ENCODE measurements at regions of chr1 and their contacts with region 1.

Region 1: DNA sequence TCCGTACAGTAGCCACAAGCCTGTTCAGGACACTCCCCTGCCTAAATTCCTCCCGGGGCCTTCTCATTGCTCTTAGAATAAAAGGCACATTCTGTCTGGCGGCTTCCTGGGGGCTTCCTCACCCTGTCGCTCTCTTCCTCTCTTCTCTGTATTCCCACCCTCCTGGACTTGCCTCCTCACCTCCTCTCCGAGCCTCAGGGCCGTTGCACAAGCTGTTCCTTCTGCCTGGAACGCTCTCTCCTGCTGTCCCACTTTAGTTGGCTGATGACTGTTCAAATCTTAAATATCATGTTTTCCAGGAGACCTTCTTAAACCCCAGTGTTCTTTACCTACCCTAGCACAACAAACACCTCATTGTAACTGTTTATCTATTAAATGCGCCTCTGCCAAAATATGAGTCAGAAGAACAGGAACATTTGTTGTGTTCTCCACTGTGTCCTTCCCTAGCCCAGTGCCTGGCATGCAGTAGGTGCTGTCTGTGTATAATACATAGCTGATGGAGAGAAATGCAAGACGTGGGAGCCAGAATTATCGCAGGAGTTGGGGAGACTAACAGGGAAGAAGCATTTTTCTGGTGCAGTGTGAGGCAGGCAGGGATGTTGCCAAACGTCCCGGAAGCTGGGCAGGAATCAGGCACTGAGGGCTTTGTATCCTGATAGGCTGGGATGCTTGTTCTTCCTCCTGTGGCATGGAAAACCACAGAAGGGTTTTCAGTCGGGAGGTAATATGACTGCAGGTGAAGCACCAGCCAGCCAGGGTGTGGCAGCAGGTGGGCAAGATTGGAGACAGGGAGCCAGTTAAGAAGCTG is 24.1 kb upstream of the THRAP3 start:
- DNase-seq: peak; percentile 55
- H3K4me3 Mint-ChIP-seq: peak overlapping the region; percentile 4
- H3K27ac Mint-ChIP-seq: peak overlapping the region; percentile 53
- H3K4me1 Mint-ChIP-seq: peaks cover 27% of the 10 kb centered on the region
- H3K27me3 Mint-ChIP-seq: no peaks in the 10 kb centered on the region
- CTCF ChIP-seq: no peak

Region 2: GRCh38 chr1:36062321-36062720 is 137.8 kb before region 1 on chr1:
- CTCF ChIA-PET with region 1: no interaction called
- intact Hi-C with region 1: no loop called
- DNase-seq: no peak
- H3K4me3 Mint-ChIP-seq: no peak overlapping the region
- H3K27ac Mint-ChIP-seq: no peak overlapping the region
- H3K4me1 Mint-ChIP-seq: no peaks in the 10 kb centered on the region
- H3K27me3 Mint-ChIP-seq: no peaks in the 10 kb centered on the region
- CTCF ChIP-seq: no peak

Region 3: GRCh38 chr1:36223993-36224536 is 23.9 kb after region 1 on chr1 and contains the start of gene THRAP3:
- CTCF ChIA-PET with region 1: interaction called, 4 read pairs
- intact Hi-C with region 1: loop called (anchors 2 kb)
- DNase-seq: peak; percentile 100
- H3K4me3 Mint-ChIP-seq: peak within 1 kb of the TSS; percentile 96
- H3K27ac Mint-ChIP-seq: peak within 1 kb of the TSS; percentile 96
- H3K4me1 Mint-ChIP-seq: peaks cover 21% of the 10 kb centered on the region
- H3K27me3 Mint-ChIP-seq: no peaks in the 10 kb centered on the region
- CTCF ChIP-seq: no peak
- total RNA-seq, gene THRAP3: 97.5 and 99.4 TPM in 2 replicates